AG04450 (cell line): ENCODE measurements at regions of chr19 and their contacts with region 1.

Region 1: DNA sequence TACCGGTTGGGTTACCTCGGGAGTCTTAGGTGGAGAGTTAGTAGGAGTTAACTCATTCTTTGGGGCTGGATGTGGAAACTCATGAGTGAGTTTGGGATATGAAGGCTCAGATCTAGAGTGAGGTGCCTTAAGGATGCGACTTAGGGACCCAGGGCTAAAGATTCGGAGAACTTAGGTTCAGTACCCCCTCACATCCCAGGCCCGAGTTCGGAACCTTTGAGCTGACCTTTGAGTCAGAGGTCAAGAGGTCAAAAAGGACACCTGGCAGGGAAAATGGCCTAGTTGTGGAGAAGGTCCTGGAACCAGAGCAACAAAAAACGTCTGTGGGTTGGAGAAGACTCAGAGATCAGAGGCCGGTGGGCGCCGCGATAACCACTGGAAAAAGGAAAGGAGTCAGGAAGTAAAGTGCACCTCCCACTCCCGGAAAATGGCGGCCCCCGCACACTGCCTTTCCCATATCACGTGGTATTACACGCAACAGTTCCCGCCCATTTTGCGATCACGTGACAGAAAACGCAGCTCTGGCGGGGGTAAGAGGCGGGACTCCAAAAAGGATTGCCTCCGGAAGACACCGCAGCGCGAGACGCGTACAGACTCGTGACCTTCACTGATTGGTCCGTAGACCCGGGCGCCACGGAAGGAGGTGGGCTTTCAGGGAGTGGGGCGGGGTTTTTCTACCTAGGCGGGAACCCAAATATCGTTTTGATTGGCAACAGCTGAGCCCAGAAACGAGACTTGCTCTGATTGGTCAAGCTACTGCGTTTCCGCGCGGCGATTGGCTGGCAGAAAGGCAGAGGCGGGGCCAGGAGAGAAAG is at the start of gene ACTMAP:
- DNase-seq: peak; percentile 100
- H3K4me3 ChIP-seq: peak within 1 kb of the TSS; percentile 94
- H3K27ac ChIP-seq: peak within 1 kb of the TSS; percentile 96
- H3K27me3 ChIP-seq: no peaks in the 10 kb centered on the region
- CTCF ChIP-seq: no peak
- polyA plus RNA-seq, gene ACTMAP: 2.9 and 4.5 TPM in 2 replicates

Region 2: GRCh38 chr19:40576585-40577451 is 173.4 kb before region 1 on chr19 and contains the start of gene SHKBP1:
- CTCF ChIA-PET with region 1: no interaction called
- POLR2A ChIA-PET with region 1: no interaction called
- DNase-seq: peak; percentile 86
- H3K4me3 ChIP-seq: peak within 1 kb of the TSS; percentile 91
- H3K27ac ChIP-seq: no peak within 1 kb of the TSS
- H3K27me3 ChIP-seq: no peaks in the 10 kb centered on the region
- CTCF ChIP-seq: no peak
- polyA plus RNA-seq, gene SHKBP1: 42.5 and 62.7 TPM in 2 replicates

Region 3: DNA sequence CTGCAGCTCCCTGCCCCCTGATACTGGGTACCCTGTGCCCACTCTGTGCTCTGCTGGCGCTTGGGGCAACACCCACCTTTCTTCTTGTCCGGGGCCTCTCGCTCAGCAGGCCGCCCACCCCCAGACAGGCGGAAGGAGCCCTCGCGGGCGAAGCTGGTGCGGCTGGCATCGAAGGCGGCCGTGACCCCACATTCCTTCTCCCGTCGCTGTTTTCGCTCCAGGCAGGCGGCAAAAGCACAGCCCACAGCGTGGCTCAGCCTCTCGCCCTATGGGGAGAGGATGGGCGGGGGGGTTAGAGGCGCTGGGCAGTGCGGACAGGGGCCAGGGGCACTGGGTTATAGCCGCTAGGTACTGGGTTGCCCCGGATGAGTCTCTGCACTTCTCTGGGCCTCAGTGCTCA is 73.1 kb before region 1 on chr19:
- CTCF ChIA-PET with region 1: no interaction called
- POLR2A ChIA-PET with region 1: no interaction called
- DNase-seq: no peak
- H3K4me3 ChIP-seq: no peak overlapping the region
- H3K27ac ChIP-seq: no peak overlapping the region
- H3K27me3 ChIP-seq: no peaks in the 10 kb centered on the region
- CTCF ChIP-seq: no peak

Region 4: DNA sequence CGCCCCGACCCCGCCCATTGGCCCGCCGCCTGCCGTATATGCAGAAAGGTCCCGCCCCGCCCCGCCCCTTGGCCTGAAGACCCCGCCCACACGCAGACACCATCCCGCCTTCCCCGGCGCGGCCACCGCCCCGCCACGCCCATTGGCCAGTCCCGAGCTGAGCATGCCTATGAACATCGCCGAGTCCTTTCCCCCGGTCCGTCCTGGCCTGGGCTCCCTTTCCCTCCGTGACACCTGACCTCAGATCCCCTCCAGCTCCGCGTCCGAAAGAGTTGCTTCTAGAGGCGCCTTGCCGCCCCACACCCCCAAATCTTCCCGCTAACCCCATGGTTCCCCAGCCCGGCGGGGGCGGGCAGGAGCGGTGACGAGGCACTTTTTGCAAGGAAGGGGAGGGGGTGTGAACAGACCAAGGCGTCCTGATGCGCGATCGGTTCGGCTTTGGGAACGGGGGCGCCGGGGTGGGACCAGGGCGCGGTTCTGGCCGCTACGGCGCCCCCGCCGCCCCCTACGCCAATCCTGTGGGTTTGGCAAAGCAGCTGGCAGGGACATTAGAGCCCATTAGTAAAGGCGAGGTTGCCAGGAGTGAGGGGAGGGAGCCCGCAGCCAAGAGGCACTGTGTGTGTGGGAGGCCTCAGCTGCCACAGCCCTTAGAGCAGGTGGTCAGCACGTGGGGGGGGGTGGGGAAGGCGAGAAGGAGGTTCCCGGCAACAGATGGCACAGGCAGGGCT is 59.4 kb before region 1 on chr19:
- CTCF ChIA-PET with region 1: no interaction called
- POLR2A ChIA-PET with region 1: interaction called, 11 read pairs
- DNase-seq: peak; percentile 78
- H3K4me3 ChIP-seq: peak overlapping the region; percentile 95
- H3K27ac ChIP-seq: peak overlapping the region; percentile 96
- H3K27me3 ChIP-seq: no peaks in the 10 kb centered on the region
- CTCF ChIP-seq: no peak

Region 5: DNA sequence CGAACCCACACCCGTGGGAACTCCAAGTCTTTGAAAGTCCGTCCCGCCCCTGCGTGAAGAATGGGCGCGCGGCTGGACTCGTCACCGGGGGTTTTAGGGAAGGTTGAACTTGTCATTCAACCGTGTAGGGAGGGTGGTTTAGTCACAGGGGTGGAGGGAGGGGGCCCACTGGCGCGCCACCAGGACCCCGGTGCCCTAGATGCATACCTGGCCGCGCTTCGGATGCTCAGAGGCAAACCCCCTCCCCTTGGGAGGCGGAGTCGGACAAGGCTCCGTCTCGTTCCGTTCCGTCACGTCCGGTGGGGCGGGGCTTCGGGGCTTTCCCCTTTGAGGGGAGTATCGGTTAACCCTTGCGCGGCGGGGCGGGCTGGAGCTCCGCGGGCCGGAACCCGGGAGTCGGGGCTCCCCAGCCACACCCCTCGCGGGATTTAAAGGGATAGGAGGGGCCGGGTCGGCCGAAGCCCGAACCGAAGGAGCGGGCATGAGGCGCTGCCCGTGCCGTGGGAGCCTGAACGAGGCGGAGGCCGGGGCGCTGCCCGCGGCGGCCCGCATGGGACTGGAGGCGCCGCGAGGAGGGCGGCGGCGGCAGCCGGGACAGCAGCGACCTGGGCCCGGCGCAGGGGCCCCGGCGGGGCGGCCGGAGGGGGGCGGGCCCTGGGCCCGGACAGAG is 33.5 kb before region 1 on chr19 and contains the starts of genes COQ8B and ITPKC:
- CTCF ChIA-PET with region 1: no interaction called
- POLR2A ChIA-PET with region 1: interaction called, 20 read pairs
- DNase-seq: peak; percentile 91
- H3K4me3 ChIP-seq: peak within 1 kb of the TSS; percentile 89
- H3K27ac ChIP-seq: peak within 1 kb of the TSS; percentile 100
- H3K27me3 ChIP-seq: no peaks in the 10 kb centered on the region
- CTCF ChIP-seq: no peak
- polyA plus RNA-seq, gene COQ8B: 16.0 and 20.2 TPM in 2 replicates
- polyA plus RNA-seq, gene ITPKC: 8.9 and 11.6 TPM in 2 replicates

Region 6: DNA sequence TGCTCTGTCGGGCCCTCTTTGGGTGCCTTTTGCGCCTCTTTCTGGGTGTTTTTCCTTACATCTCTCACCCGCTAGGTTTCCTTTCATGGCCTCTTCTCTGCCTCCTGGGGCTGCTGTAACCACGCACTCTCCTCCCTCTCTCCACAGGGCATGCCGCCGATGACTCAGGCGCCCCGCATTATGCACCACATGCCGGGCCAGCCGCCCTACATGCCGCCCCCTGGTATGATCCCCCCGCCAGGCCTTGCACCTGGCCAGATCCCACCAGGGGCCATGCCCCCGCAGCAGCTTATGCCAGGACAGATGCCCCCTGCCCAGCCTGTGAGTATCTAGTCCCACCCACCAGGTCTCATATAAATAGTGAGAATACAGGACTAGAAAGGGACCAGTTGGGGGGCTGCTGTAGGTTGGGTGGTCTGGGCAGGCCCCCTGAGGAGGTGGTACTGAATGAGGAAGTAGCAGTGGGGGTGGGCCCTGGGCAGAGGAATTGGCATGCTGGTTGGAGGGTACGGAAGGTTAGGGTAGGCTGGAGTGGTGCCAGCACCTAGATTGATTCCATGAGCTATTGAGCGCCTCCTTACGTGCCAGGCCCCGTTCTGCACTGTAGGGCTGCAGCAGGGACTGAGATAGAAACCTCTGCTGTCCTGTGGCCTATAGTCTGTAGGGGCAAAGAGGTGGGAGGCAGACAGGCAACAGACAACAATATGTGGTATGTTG is 12.6 kb after region 1 on chr19:
- CTCF ChIA-PET with region 1: no interaction called
- POLR2A ChIA-PET with region 1: interaction called, 16 read pairs
- DNase-seq: no peak
- H3K4me3 ChIP-seq: no peak overlapping the region
- H3K27ac ChIP-seq: no peak overlapping the region
- H3K27me3 ChIP-seq: no peaks in the 10 kb centered on the region
- CTCF ChIP-seq: no peak

Region 7: GRCh38 chr19:40777937-40778705 is 27.9 kb after region 1 on chr19 and contains the start of gene RAB4B:
- CTCF ChIA-PET with region 1: no interaction called
- POLR2A ChIA-PET with region 1: interaction called, 28 read pairs
- DNase-seq: peak; percentile 100
- H3K4me3 ChIP-seq: peak within 1 kb of the TSS; percentile 75
- H3K27ac ChIP-seq: peak within 1 kb of the TSS; percentile 96
- H3K27me3 ChIP-seq: no peaks in the 10 kb centered on the region
- CTCF ChIP-seq: no peak
- polyA plus RNA-seq, gene RAB4B: 14.0 and 16.2 TPM in 2 replicates

Region 8: DNA sequence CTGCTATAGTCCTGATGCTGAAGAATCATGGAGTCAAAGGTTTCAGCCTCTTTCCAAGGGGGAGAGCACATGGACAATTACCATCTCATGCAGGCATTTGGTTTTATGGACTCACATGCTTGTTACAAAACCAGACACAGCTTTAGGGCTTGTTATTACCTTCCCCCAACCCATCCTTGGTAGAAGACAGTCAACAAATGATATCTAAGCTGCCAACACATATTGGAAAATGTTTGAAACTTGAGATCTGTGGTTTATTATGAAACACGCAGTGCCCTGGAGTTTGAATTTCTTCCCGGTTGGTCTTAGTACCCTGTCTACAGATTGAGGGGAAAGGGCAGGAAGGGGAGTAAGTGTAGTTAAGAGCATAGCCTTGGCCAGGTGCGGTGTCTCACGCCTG is 112.5 kb after region 1 on chr19:
- CTCF ChIA-PET with region 1: no interaction called
- POLR2A ChIA-PET with region 1: no interaction called
- DNase-seq: no peak
- H3K4me3 ChIP-seq: no peak overlapping the region
- H3K27ac ChIP-seq: no peak overlapping the region
- H3K27me3 ChIP-seq: no peaks in the 10 kb centered on the region
- CTCF ChIP-seq: no peak

Region 9: DNA sequence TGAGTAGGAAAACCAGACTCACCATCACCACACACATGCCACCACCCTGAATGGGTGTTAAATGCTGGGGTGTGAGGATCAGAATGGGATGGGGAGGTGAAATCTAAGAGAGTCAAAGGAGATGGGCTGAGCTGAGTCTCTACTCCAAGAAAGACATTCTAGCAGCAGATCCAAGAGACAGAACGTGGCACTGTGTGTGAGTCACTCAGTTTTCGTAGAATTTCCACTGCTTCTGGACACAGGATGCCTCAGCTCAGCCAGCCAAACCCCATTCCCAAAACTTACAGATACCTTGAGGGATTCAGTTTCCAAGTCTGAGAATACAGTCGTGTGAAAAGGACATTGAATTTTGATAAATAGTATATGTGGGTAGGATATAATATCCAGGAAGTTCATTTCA is 139.1 kb after region 1 on chr19:
- CTCF ChIA-PET with region 1: no interaction called
- POLR2A ChIA-PET with region 1: no interaction called
- DNase-seq: no peak
- H3K4me3 ChIP-seq: no peak overlapping the region
- H3K27ac ChIP-seq: no peak overlapping the region
- H3K27me3 ChIP-seq: peaks cover 2% of the 10 kb centered on the region
- CTCF ChIP-seq: no peak

Region 10: DNA sequence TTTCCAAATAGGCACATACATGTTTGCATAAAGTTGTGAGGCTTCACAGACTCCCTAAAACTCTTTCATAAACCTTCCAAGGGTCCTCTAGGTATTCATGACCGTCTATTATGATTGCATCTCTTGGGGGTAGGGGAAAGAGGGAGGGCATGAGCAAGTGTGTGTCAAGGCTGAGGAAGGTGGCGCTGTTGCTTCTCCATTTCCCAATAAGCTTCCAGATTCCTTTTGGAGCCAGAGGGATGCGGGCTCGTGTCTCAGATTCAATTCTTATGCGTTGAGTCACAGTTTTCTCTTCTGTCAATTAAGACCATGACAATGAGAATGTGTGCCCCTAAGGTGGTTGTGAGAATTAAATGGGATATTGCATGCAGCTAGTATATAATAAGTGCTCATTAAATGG is 182.8 kb after region 1 on chr19:
- CTCF ChIA-PET with region 1: no interaction called
- POLR2A ChIA-PET with region 1: interaction called, 12 read pairs
- DNase-seq: no peak
- H3K4me3 ChIP-seq: no peak overlapping the region
- H3K27ac ChIP-seq: no peak overlapping the region
- H3K27me3 ChIP-seq: peaks cover 5% of the 10 kb centered on the region
- CTCF ChIP-seq: no peak